Activated T-helper 1 cell treated with anti-CD3 and anti-CD28 coated beads, Interleukin-12 subunit alpha, Interleukin-12 subunit beta, Interleukin-2, Interleukin-4 antibody, amounts not matched to agents 30 ng/mL and 10 ng/mL and 1 ng/mL, durations not matched to agents 14 hours and 24 hours and 36 hours (primary cell): ENCODE measurements at regions of chr1 and their contacts with region 1.

Region 1: GRCh38 chr1:108691942-108692723 is at the start of gene PRPF38B:
- DNase-seq: peak; percentile 92
- H3K4me3 Mint-ChIP-seq: peak within 1 kb of the TSS; percentile 100
- H3K27ac Mint-ChIP-seq: peak within 1 kb of the TSS; percentile 100
- H3K4me1 Mint-ChIP-seq: peaks cover 44% of the 10 kb centered on the region
- H3K27me3 Mint-ChIP-seq: peaks cover 9% of the 10 kb centered on the region
- total RNA-seq, gene PRPF38B: 94.4 and 99.8 TPM in 2 replicates

Region 2: DNA sequence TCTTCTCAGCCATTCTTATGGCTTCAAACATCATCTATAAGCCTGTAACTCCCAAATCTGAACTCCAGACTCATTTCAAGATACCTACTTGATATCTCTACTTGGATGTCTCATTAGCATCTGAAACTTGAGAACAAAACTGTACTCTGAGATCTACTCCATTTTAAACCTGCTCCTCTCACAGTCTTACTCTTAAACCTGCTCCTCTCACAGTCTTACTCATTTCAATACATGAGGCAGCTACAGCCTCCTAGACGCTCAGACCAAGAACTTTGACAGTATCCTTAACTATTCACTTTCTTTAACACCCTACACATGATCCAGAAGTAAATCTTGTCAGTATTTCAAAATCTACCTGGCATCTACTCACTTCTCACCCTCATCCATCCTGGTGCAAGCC is 187.7 kb before region 1 on chr1:
- intact Hi-C with region 1: loop called (anchors 2 kb)
- DNase-seq: no peak
- H3K4me3 Mint-ChIP-seq: no peak overlapping the region
- H3K27ac Mint-ChIP-seq: no peak overlapping the region
- H3K4me1 Mint-ChIP-seq: no peaks in the 10 kb centered on the region
- H3K27me3 Mint-ChIP-seq: peaks cover 41% of the 10 kb centered on the region

Region 3: DNA sequence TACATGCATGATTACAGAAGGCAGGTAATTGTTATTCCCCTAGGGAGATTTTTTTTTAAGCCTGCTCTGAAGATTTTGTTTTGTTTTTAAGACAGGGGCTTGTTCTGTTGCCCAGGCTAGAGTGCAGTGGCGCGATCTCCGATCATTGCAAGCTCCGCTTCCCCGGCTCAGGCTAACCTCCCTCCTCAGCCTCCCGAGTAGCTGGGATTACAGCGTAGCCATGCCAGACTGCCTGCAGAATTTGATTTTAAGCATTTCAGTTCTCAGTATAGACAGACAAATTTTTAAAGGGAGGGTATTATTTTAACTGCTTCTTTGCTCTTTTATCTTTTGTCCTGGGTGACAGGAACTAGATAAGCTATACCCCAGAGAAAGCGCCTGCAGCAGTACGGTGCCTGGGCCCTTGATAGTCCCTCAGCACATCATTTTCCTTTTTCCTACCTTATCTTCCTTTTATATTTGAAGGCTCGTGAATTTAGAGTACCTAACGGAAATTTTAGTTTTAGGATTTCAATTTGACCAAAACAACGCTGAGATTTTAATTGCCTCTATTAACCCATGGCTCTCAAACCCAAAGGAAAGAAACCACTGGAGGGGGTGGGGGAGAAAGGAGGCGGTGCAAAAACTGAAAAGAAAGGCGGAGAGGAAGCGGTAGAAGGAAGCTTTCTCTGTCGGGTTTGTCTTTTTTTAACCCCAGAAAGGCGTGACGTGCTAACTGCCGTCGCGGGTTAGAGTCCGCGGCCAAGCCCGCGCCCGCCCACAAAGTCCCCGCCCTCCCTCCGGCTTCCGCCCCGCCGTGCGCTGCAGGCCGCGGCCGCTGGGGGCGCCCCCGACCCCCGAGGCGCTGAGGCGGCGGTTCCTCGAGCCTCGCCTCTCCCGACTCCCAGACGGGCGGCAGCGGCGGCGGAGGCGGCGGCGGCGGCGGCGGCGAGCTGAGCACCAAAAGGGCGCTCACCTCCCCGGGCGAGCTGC is 132.6 kb before region 1 on chr1 and contains the start of gene EEIG2:
- intact Hi-C with region 1: loop called (anchors 1 kb)
- DNase-seq: peak; percentile 85
- H3K4me3 Mint-ChIP-seq: peak within 1 kb of the TSS; percentile 92
- H3K27ac Mint-ChIP-seq: peak within 1 kb of the TSS; percentile 83
- H3K4me1 Mint-ChIP-seq: peaks cover 31% of the 10 kb centered on the region
- H3K27me3 Mint-ChIP-seq: peaks cover 4% of the 10 kb centered on the region
- total RNA-seq, gene EEIG2: 16.7 and 18.5 TPM in 2 replicates

Region 4: GRCh38 chr1:108643492-108644335 is 48.4 kb before region 1 on chr1:
- intact Hi-C with region 1: loop called (anchors 1 kb)
- DNase-seq: peak; percentile 30
- H3K4me3 Mint-ChIP-seq: peak overlapping the region; percentile 31
- H3K27ac Mint-ChIP-seq: peak overlapping the region; percentile 68
- H3K4me1 Mint-ChIP-seq: peaks cover 71% of the 10 kb centered on the region
- H3K27me3 Mint-ChIP-seq: no peaks in the 10 kb centered on the region

Region 5: GRCh38 chr1:108746372-108747205 is 54.5 kb after region 1 on chr1 and contains the start of gene STXBP3:
- intact Hi-C with region 1: loop called (anchors 1 kb)
- DNase-seq: peak; percentile 98
- H3K4me3 Mint-ChIP-seq: peak within 1 kb of the TSS; percentile 97
- H3K27ac Mint-ChIP-seq: peak within 1 kb of the TSS; percentile 100
- H3K4me1 Mint-ChIP-seq: peaks cover 35% of the 10 kb centered on the region
- H3K27me3 Mint-ChIP-seq: peaks cover 3% of the 10 kb centered on the region
- total RNA-seq, gene STXBP3: 39.6 and 42.4 TPM in 2 replicates

Region 6: DNA sequence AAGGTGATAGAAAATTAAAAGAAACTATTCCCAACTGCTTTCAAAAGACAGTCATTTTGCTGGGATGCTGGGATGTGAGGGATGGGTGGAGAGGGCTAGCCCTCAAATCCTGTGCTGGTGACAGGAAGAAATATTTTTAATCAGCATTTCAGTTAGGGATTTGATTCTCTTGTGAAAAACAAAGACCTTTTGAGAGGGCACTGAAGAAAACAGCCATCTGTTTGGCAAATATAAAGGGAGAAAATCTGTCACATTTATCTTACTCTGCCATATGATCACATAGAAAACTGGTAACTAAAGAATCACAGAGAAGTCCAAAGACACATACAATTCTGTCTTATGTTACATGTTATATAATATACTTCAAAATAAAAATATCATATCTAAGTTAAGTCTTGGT is 66.7 kb after region 1 on chr1:
- intact Hi-C with region 1: no loop called
- DNase-seq: no peak
- H3K4me3 Mint-ChIP-seq: no peak overlapping the region
- H3K27ac Mint-ChIP-seq: no peak overlapping the region
- H3K4me1 Mint-ChIP-seq: peaks cover 8% of the 10 kb centered on the region
- H3K27me3 Mint-ChIP-seq: no peaks in the 10 kb centered on the region

Region 7: DNA sequence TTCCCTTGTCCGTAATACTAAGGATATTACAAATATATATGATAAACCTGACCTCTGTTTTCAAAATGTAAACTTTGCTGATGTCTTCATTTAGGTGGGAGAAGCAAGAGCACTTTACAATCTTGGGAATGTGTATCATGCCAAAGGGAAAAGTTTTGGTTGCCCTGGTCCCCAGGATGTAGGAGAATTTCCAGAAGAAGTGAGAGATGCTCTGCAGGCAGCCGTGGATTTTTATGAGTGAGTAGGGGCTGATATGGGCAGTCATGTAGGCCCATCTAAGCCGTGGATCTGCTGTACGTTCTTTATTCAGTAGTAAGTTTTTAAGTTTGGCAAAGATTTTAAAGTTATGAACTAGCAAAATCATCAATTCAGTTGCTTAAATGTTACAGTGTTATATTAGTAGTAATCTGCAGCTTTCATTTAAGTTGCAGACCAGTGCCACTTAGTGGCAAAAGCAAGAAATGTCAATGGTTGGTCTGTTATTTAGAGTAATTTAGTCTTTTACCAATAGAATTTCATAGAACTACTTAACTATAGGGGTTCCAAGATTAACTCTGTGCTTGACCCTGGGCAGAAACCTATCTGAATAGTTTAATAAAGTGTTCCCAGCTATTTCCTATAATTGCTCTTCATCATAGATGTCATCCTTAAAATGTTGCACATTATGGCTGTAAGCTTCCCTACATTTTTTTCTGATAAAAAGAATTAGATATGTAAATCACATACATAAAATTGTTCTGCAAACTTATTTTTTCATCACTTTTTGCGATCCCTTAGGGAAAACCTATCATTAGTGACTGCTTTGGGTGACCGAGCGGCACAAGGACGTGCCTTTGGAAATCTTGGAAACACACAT is 206.0 kb after region 1 on chr1:
- intact Hi-C with region 1: loop called (anchors 5 kb)
- DNase-seq: peak; percentile 10
- H3K4me3 Mint-ChIP-seq: no peak overlapping the region
- H3K27ac Mint-ChIP-seq: no peak overlapping the region
- H3K4me1 Mint-ChIP-seq: no peaks in the 10 kb centered on the region
- H3K27me3 Mint-ChIP-seq: no peaks in the 10 kb centered on the region

Region 8: DNA sequence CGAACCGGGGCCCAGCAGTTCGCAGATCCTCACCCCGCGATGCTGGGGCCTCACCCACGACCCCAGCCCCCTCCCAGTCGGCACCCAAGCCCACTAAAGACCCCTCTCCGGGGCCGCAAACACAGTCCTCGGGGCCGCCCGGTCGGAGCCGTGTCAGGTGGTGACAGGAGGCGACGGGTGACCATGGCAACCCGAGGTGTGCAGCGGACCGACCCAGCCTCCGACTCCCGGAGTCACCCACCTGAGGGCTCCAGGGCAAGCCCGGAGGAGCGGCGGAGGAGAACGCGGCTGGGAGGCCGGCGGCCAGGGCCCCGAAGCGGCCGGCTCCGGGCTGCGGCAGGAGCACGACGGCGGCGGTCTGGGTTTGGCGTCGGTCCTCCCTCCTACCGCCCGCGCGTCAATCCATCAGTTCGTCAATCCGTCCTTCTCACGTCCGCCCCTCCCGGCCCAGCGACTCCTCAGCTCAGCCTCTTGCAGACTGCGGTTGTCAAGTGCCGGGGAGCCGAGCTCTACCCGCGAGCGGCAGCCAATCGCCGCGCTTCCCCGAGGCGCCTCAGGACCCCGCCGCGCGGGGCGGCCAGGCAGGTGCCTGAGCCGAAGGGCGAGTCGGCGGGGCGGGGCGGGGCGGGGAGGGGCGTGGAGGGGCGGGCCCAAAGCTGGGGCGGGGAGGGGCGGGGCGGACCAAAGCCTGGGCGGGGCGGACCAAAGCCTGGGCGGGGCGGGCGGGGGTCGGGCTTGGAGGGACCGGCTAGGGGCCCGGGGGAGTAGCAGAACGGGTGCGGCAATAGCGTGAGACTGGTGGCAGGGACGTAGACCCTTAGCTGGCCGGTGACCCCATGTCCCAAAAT is 349.7 kb after region 1 on chr1 and contains the start of gene WDR47:
- intact Hi-C with region 1: loop called (anchors 1 kb)
- DNase-seq: peak; percentile 96
- H3K4me3 Mint-ChIP-seq: peak within 1 kb of the TSS; percentile 91
- H3K27ac Mint-ChIP-seq: peak within 1 kb of the TSS; percentile 92
- H3K4me1 Mint-ChIP-seq: peaks cover 11% of the 10 kb centered on the region
- H3K27me3 Mint-ChIP-seq: no peaks in the 10 kb centered on the region
- total RNA-seq, gene WDR47: 11.5 and 14.4 TPM in 2 replicates